ENCODE measurements at regions of chr1 and their contacts with region 1.

Region 1: DNA sequence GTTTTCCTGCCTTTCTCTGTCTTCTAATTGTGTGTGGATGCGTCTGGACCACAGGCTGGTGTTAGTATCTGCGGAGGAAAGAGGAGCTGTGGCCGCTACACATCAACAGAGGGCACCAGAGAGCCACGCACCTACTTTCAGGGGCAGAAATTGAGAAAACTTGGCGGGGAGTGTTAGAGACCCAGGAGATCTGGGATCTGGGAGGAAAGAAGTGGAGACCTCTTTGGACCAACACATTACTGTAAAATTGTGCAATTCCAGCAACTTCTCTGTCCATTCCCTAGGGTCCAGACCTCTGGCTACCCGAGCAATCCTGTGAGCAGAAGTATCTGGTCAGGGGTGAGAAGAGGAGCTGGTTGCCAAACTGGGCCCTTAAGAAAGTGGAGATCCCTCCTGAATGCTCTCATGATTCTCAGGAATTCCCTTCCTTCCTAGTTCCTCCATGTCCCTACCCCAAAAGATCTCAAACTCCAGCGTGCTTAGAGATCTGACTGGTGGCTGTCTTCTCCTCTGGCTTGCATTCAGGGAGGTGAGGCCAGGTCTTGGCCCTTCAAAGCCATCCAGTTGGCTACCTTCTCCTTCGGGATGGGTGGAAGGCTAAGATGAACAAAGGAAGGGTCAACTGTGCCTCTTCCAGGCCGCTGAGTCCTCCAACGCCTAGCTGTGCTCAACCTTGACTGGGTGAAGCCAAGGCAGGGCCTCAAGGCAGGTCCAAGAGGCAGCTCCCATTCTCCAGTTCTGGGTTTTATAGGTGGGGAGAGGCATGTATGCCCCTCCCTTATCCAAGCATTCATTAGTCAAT is 1.2 kb upstream of the KIRREL1 start:
- DNase-seq: peak; percentile 77
- ATAC-seq: peak; percentile 45
- H3K4me3 Mint-ChIP-seq: peak overlapping the region; percentile 90
- H3K27ac Mint-ChIP-seq: no peak overlapping the region
- H3K4me1 Mint-ChIP-seq: peaks cover 38% of the 10 kb centered on the region
- H3K27me3 Mint-ChIP-seq: peaks cover 5% of the 10 kb centered on the region; the same call in 1 of the 2 replicates
- CTCF ChIP-seq: peak; percentile 81

Region 2: DNA sequence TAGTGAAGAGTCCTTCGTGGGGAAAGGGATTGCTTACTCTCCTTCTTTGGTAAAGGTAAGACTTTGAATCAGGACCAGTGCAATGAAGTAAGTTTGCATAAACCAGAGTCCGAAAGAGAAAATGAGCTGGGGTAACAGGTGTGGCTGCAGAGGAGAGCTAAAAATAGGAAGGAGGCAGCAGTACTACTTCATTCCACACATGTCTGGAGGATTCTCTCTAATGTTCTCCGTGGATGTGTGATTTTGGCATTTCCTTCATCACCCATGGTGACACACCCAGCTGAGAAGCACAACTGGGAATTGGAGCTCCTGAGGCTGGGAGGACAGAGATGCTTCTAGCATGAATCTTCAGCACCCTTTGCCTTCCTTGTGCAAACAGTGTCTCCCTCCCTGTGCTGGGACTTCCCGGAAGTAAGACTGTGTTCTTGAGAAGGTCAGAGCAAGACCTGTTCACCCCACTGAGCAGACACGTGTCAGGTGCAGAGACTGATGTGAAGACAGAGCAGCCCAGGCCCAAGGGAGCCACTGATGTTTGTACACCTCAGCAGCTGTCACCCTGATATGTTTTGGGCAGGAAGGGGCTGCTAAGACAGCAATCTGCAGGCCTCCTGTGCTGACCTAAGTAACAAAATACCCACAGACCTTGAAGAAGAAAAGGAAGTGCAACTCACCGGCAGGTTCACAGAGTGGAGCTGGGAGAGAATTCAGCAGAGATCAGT is 185.6 kb before region 1 on chr1:
- CTCF ChIA-PET with region 1: no interaction called
- POLR2A ChIA-PET with region 1: no interaction called
- DNase-seq: no peak
- ATAC-seq: no peak; the same call in 1 of the 2 replicates
- H3K4me3 Mint-ChIP-seq: no peak overlapping the region
- H3K27ac Mint-ChIP-seq: no peak overlapping the region
- H3K4me1 Mint-ChIP-seq: no peaks in the 10 kb centered on the region
- H3K27me3 Mint-ChIP-seq: no peaks in the 10 kb centered on the region; the same call in none of the 2 replicates
- CTCF ChIP-seq: no peak

Region 3: GRCh38 chr1:157894613-157895165 is 97.5 kb before region 1 on chr1:
- CTCF ChIA-PET with region 1: no interaction called
- POLR2A ChIA-PET with region 1: no interaction called
- DNase-seq: no peak
- ATAC-seq: no peak
- H3K4me3 Mint-ChIP-seq: no peak overlapping the region
- H3K27ac Mint-ChIP-seq: no peak overlapping the region
- H3K4me1 Mint-ChIP-seq: no peaks in the 10 kb centered on the region
- H3K27me3 Mint-ChIP-seq: peaks cover 11% of the 10 kb centered on the region
- CTCF ChIP-seq: no peak

Region 4: GRCh38 chr1:157910270-157910669 is 82.0 kb before region 1 on chr1:
- CTCF ChIA-PET with region 1: no interaction called
- POLR2A ChIA-PET with region 1: no interaction called
- DNase-seq: no peak
- ATAC-seq: no peak
- H3K4me3 Mint-ChIP-seq: no peak overlapping the region
- H3K27ac Mint-ChIP-seq: no peak overlapping the region
- H3K4me1 Mint-ChIP-seq: no peaks in the 10 kb centered on the region
- H3K27me3 Mint-ChIP-seq: peaks cover 19% of the 10 kb centered on the region
- CTCF ChIP-seq: no peak

Region 5: GRCh38 chr1:157969697-157970485 is 22.3 kb before region 1 on chr1:
- CTCF ChIA-PET with region 1: interaction called, 49 read pairs
- POLR2A ChIA-PET with region 1: no interaction called
- DNase-seq: peak; percentile 62
- ATAC-seq: peak; percentile 80
- H3K4me3 Mint-ChIP-seq: no peak overlapping the region
- H3K27ac Mint-ChIP-seq: no peak overlapping the region
- H3K4me1 Mint-ChIP-seq: peaks cover 21% of the 10 kb centered on the region
- H3K27me3 Mint-ChIP-seq: peaks cover 9% of the 10 kb centered on the region; the same call in 1 of the 2 replicates
- CTCF ChIP-seq: peak; percentile 64; the same call in 1 of the 2 replicates

Region 6: GRCh38 chr1:158013840-158014730 is 21.9 kb after region 1 on chr1:
- CTCF ChIA-PET with region 1: interaction called, 174 read pairs
- POLR2A ChIA-PET with region 1: interaction called, 8 read pairs
- DNase-seq: no peak
- ATAC-seq: peak; percentile 4
- H3K4me3 Mint-ChIP-seq: peak overlapping the region; percentile 44
- H3K27ac Mint-ChIP-seq: peak overlapping the region; percentile 96
- H3K4me1 Mint-ChIP-seq: peaks cover 95% of the 10 kb centered on the region
- H3K27me3 Mint-ChIP-seq: no peaks in the 10 kb centered on the region
- CTCF ChIP-seq: no peak

Region 7: GRCh38 chr1:158028969-158029368 is 36.7 kb after region 1 on chr1:
- CTCF ChIA-PET with region 1: interaction called, 50 read pairs
- POLR2A ChIA-PET with region 1: no interaction called
- DNase-seq: no peak
- ATAC-seq: no peak
- H3K4me3 Mint-ChIP-seq: no peak overlapping the region
- H3K27ac Mint-ChIP-seq: no peak overlapping the region
- H3K4me1 Mint-ChIP-seq: peaks cover 34% of the 10 kb centered on the region
- H3K27me3 Mint-ChIP-seq: no peaks in the 10 kb centered on the region
- CTCF ChIP-seq: no peak

Region 8: DNA sequence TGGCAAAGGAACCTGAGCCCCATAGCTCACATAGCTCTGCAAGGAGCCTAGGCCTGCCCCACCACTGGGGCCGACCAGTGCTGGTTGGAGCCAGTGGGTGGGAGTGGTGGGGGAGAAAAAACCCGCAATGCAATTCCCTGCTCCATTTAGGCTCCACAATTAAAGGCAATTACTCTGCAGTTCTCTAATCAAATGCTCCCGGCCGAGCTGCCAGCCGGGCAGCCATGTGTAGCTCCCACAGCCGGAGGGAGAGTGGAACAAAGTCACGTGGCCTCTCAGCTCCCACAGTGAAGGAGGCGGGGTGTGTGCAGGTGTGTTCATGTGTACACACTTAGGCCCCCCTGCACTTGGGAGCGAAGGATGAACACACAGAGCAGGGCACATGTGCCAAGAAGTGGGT is 82.8 kb after region 1 on chr1:
- CTCF ChIA-PET with region 1: interaction called, 47 read pairs
- POLR2A ChIA-PET with region 1: interaction called, 3 read pairs
- DNase-seq: no peak
- ATAC-seq: no peak
- H3K4me3 Mint-ChIP-seq: no peak overlapping the region
- H3K27ac Mint-ChIP-seq: no peak overlapping the region
- H3K4me1 Mint-ChIP-seq: peaks cover 79% of the 10 kb centered on the region
- H3K27me3 Mint-ChIP-seq: no peaks in the 10 kb centered on the region
- CTCF ChIP-seq: no peak

Region 9: DNA sequence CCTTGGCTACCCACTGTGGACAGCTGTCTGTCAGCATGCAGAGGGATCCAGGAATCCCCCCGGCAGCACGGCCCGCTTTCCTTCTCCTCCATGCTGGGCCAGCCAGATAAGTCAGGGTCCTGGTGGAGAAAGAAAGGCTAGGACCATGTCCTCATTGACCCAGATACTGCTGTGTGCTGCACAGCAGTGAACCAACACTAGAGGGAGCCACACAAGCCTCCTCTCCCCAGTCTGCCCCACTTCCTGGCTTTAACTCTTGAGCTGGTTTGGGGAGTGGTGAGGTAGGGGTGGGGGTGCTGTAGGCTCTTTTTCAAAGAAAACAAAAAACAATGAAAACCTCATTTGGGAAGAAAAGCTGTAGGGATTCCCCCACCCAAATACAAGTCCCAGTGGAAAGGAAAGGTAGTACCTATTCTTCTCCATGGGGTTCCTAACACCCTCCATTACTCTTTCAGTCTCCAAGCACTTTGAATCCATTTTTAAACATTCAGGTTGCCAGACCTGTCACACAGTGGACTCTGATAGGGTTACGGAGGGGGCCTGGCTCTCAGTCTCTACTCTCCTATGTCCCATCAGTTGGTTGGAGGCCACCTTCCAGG is 103.6 kb after region 1 on chr1:
- CTCF ChIA-PET with region 1: interaction called, 52 read pairs
- POLR2A ChIA-PET with region 1: interaction called, 4 read pairs
- DNase-seq: peak; percentile 70
- ATAC-seq: peak; percentile 84
- H3K4me3 Mint-ChIP-seq: no peak overlapping the region
- H3K27ac Mint-ChIP-seq: no peak overlapping the region
- H3K4me1 Mint-ChIP-seq: peaks cover 51% of the 10 kb centered on the region
- H3K27me3 Mint-ChIP-seq: no peaks in the 10 kb centered on the region
- CTCF ChIP-seq: peak; percentile 75

Region 10: DNA sequence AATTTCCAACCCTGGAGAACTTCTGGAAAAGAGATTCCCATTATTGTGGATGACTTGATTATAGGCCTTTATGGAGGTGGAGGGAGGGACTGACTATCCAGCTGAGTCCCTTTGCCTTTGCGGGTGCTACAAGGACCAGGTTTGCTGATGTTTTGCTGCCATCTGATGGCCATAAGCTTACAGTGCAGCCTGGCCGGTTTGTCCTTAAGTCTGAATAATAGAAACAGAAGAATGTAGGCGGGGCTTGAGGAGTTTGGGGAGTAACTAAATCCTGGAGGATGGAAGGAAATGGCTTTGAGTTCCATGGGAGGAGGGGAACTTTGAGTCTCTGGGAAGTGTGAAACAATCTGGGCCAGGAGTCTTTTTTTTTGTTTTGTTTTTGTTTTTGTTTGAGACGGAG is 132.8 kb after region 1 on chr1:
- CTCF ChIA-PET with region 1: interaction called, 475 read pairs
- POLR2A ChIA-PET with region 1: no interaction called
- DNase-seq: peak; percentile 91
- ATAC-seq: peak; percentile 89
- H3K4me3 Mint-ChIP-seq: no peak overlapping the region
- H3K27ac Mint-ChIP-seq: no peak overlapping the region
- H3K4me1 Mint-ChIP-seq: peaks cover 39% of the 10 kb centered on the region
- H3K27me3 Mint-ChIP-seq: no peaks in the 10 kb centered on the region; the same call in none of the 2 replicates
- CTCF ChIP-seq: peak; percentile 78

Measured in WTC11 (cell line).